ENCODE measurements at regions of chr4 and their contacts with region 1.

Region 1: GRCh38 chr4:2468445-2469192 is at the start of gene RNF4:
- DNase-seq: peak; percentile 93 to 97 (median 94)
- H3K4me3 ChIP-seq: peak within 1 kb of the TSS; percentile 99
- H3K27ac ChIP-seq: peak within 1 kb of the TSS; percentile 67 to 93
- H3K4me1 ChIP-seq: peaks cover 3% of the 10 kb centered on the region
- H3K27me3 ChIP-seq: no peaks in the 10 kb centered on the region
- CTCF ChIP-seq: no peak
- EP300 ChIP-seq: no peak
- POLR2A ChIP-seq: peak; percentile 49
- total RNA-seq, gene RNF4: 27.9 to 72.1 (median 47.1) TPM

Region 2: GRCh38 chr4:674172-675035 is 1794.2 kb before region 1 on chr4 and contains the starts of genes ATP5ME and MYL5:
- intact Hi-C with region 1: loop called in 1 of 4 experiments (anchors 10 kb)
- DNase-seq: peak; percentile 96 to 99 (median 97)
- H3K4me3 ChIP-seq: peak within 1 kb of the TSS; percentile 100
- H3K27ac ChIP-seq: peak within 1 kb of the TSS; percentile 70 to 97
- H3K4me1 ChIP-seq: peaks cover 17% of the 10 kb centered on the region
- H3K27me3 ChIP-seq: no peaks in the 10 kb centered on the region
- CTCF ChIP-seq: peak; percentile 91 to 98 (median 94)
- EP300 ChIP-seq: peak; percentile 78
- POLR2A ChIP-seq: peak; percentile 92
- total RNA-seq, gene ATP5ME: 180 to 267 (median 189) TPM
- total RNA-seq, gene MYL5: 4.0 to 18.3 (median 10.0) TPM

Region 3: GRCh38 chr4:2220016-2220630 is 248.5 kb before region 1 on chr4:
- intact Hi-C with region 1: loop called in 3 of 4 experiments (anchors 5 to 10 kb)
- DNase-seq: peak; percentile 63 to 79 (median 76)
- H3K4me3 ChIP-seq: no peak overlapping the region
- H3K27ac ChIP-seq: no peak overlapping the region
- H3K4me1 ChIP-seq: no peaks in the 10 kb centered on the region
- H3K27me3 ChIP-seq: no peaks in the 10 kb centered on the region
- CTCF ChIP-seq: peak; percentile 61 to 87 (median 72)
- EP300 ChIP-seq: no peak
- POLR2A ChIP-seq: no peak

Region 4: GRCh38 chr4:2241410-2242353 is 226.9 kb before region 1 on chr4 and contains the starts of genes HAUS3 and POLN:
- intact Hi-C with region 1: loop called in 2 of 4 experiments (anchors 5 to 10 kb)
- DNase-seq: peak; percentile 99 to 100 (median 99)
- H3K4me3 ChIP-seq: peak within 1 kb of the TSS; percentile 85
- H3K27ac ChIP-seq: peak within 1 kb of the TSS in 1 of 2 donors; percentile 38
- H3K4me1 ChIP-seq: peaks cover 15% of the 10 kb centered on the region
- H3K27me3 ChIP-seq: no peaks in the 10 kb centered on the region
- CTCF ChIP-seq: no peak
- EP300 ChIP-seq: no peak
- POLR2A ChIP-seq: peak; percentile 56
- total RNA-seq, gene HAUS3: 9.3 to 17.4 (median 12.5) TPM
- total RNA-seq, gene POLN: 0.95 to 11.4 (median 3.4) TPM

Region 5: DNA sequence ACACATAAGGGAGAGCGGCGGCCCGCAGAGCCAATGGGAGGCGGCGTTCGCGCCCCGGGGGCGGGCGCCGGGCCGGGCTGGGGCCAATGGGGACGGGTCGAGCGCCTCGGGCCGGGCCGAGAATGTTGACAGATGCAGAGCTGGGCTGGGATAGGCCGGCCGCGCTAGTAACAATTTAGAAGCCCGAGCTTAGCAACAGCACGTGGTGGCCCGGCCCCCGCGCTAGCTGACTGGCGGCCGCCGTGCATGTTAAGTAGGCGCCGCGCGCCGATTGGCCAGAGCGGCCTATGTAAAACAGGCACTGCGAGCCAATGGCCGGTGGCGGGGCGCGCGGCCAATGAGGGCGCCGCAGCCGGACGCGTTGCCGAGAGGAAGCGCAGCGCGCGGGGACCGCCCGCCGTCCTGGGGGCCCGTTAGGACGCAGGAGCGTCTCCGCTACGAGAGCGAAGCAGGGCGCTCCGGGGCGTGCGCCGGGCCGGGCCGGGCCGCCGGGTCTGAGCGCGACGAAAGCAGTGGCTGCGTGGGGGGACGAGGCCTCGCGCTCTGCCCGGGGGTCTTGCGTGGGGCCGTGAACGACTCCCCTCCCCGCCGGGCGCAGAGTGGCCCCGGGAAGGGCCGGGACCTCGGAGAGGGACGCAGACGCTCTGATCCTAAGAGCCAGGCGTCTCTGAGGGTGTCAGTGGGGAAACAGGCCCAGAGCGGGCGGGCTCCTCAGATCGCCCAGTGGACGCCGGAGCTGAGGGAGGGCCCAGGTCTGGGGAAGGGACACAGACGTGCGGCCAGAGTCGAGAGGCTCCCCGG is 206.3 kb before region 1 on chr4:
- intact Hi-C with region 1: loop called in 1 of 4 experiments (anchors 10 kb)
- DNase-seq: peak; percentile 98 to 100 (median 99)
- H3K4me3 ChIP-seq: peak overlapping the region; percentile 43
- H3K27ac ChIP-seq: peak overlapping the region; percentile 61 to 97
- H3K4me1 ChIP-seq: peaks cover 12% of the 10 kb centered on the region
- H3K27me3 ChIP-seq: no peaks in the 10 kb centered on the region
- CTCF ChIP-seq: no peak
- EP300 ChIP-seq: no peak
- POLR2A ChIP-seq: peak; percentile 88